ENCODE measurements at regions of chr11 and their contacts with region 1.

Region 1: DNA sequence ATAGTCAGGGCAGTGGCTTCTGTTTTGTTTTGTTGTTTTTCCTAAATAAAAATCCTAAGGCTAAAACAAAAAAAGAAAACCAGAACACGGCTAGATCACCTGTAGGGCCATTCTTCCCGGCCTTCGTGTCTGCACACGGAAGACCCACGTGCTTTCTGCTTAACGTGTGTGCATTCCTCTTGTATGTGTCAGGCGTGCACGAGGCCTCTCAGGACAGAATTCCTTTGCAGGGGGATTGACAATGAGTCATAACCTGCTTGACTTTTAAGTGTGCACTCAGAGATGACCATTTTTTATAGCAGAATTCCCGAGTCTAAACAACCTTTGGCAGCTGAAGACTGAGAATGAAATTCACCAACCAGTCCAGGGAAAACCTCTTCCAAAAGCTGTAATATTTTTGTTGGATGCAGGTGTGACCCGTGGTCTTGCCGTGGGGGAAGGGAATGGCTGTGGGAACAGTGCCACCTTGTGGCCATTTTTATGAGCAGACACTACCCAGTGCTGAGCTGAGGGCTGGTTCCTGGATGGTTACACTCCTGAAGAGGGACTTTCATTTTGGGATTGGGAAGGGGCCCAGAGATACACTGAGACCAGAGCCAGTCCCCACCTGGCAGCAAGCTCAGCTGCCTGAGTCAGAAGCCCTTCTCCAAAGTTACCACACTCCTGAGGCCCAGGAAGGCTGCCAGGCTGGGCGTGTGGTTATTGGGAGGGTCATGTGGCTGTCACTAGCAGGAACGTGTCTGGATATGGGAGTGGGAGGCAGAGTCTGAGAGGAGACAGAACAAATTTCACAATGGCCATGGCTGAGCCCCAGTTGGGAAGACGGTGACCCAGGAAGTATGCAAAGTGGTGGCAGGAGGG is 35.8 kb upstream of the DKK3 start:
- DNase-seq: peak; percentile 90 to 92
- H3K4me3 ChIP-seq: peak overlapping the region; percentile 6; the same call in 1 of the 2 replicates
- H3K4me3 Mint-ChIP-seq: peak overlapping the region; percentile 65
- H3K27ac Mint-ChIP-seq: peak overlapping the region; percentile 97
- H3K4me1 ChIP-seq: peaks cover 45% of the 10 kb centered on the region
- H3K4me1 Mint-ChIP-seq: peaks cover 48% of the 10 kb centered on the region
- H3K27me3 ChIP-seq: no peaks in the 10 kb centered on the region
- H3K27me3 Mint-ChIP-seq: no peaks in the 10 kb centered on the region
- CTCF ChIP-seq: peak; percentile 87 to 89

Region 2: DNA sequence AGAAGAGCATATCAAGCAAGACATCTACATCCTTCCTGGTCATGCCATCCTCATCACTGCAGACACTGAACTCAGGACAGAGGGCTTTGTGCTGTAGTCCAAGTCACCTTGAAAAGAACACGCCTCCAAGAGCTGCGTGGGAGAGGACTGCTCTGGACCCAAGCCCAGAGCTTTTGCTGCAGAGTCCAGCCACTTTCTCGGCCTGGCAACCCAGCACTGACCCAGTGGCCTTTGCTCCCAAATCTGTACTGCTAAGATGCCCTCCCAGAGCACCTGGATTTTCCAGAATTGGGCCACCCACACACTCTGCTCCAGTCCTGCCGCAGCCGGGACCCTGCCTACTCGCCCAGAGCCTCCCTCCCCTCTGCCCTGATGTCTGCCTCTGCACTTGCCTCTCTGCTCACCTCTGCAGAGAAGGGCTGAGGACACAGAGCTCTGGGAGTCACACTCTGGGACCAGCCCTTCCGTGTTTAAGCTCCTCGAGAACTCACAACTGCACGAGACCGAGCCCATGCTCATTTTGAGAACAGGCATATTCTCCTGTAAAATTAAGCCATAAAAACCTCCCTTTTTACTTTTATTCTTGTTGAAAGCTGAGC is 607.4 kb before region 1 on chr11:
- CTCF ChIA-PET with region 1: no interaction called
- POLR2A ChIA-PET with region 1: no interaction called
- intact Hi-C with region 1: no loop called
- DNase-seq: no peak
- H3K4me3 ChIP-seq: no peak overlapping the region
- H3K4me3 Mint-ChIP-seq: no peak overlapping the region
- H3K27ac Mint-ChIP-seq: no peak overlapping the region
- H3K4me1 ChIP-seq: no peaks in the 10 kb centered on the region
- H3K4me1 Mint-ChIP-seq: no peaks in the 10 kb centered on the region
- H3K27me3 ChIP-seq: no peaks in the 10 kb centered on the region
- H3K27me3 Mint-ChIP-seq: peaks cover 11% of the 10 kb centered on the region
- CTCF ChIP-seq: no peak

Region 3: DNA sequence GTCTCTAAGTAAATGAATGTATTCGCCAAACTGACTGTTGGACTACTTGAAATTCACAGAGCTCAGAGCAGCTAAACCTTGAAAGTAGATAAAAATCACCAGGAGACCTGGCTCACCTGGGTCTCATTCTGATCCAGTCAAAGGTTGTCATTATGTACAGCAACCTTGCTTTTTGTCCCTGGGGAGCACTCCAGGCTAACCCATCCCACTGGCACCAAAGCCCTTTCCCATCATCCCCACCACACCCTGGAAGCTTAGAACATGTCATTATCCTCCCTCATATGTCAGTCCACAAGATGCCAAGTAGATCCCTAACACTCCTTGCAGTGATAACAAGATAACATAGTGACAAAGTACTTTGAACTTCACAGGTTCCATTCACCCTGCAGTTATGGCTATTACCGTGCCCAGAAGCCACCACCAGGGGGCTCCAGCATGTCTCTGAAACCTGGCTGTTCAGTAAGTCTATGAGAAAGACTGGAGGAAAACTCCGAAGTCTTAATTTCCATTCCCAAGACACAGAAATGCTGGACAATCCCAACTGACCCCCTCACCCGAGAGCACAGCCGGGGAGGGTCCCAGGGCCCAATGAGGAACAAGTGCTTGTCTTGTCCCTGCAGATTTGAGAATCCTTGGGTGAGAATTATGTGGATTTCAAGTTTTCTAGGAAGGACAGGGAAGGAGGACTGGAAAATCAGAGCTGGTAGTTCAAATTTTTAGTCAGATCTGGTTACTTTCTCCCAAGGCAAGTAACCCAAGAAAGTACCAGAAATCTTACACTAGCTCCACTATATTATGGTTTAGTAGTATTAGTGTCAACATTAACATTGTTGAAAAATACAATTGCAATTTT is 245.4 kb before region 1 on chr11:
- CTCF ChIA-PET with region 1: interaction called, 8 read pairs
- POLR2A ChIA-PET with region 1: no interaction called
- intact Hi-C with region 1: loop called (anchors 1 kb)
- DNase-seq: peak; percentile 83 to 89
- H3K4me3 ChIP-seq: no peak overlapping the region
- H3K4me3 Mint-ChIP-seq: no peak overlapping the region
- H3K27ac Mint-ChIP-seq: no peak overlapping the region
- H3K4me1 ChIP-seq: no peaks in the 10 kb centered on the region; the same call in 1 of the 2 replicates
- H3K4me1 Mint-ChIP-seq: no peaks in the 10 kb centered on the region
- H3K27me3 ChIP-seq: peaks cover 1% of the 10 kb centered on the region
- H3K27me3 Mint-ChIP-seq: peaks cover 6% of the 10 kb centered on the region
- CTCF ChIP-seq: peak; percentile 96

Region 4: DNA sequence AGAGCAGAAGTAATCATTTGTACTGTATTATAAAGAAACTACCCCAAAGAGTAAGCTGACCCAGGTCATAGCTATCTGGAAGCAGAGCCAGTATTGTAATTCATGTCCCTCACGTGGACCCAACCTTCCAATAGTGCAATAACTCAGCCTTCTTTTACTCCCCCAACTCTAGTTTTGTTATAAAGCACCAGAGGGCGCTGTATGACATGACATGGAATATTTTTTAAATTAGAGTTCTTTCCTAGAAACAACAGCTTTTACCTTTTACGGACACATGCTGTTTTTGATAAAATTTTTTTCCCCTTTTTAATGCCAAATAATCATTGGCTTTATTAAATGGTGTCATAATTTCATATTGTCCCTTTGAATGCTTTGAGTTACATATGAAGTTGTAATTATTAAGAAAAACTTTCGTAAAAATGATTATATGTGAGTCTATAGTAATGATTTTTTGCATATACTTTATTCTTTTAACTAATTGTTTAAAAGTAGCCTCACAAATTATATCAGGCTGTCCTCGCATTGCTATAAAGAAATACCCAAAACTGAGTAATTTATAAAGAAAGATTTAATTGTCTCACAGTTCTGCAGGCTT is 112.6 kb before region 1 on chr11:
- CTCF ChIA-PET with region 1: interaction called, 26 read pairs
- POLR2A ChIA-PET with region 1: no interaction called
- intact Hi-C with region 1: loop called (anchors 1 kb)
- DNase-seq: peak in 1 of 2 experiments; percentile 39
- H3K4me3 ChIP-seq: no peak overlapping the region
- H3K4me3 Mint-ChIP-seq: no peak overlapping the region
- H3K27ac Mint-ChIP-seq: no peak overlapping the region
- H3K4me1 ChIP-seq: no peaks in the 10 kb centered on the region
- H3K4me1 Mint-ChIP-seq: no peaks in the 10 kb centered on the region
- H3K27me3 ChIP-seq: no peaks in the 10 kb centered on the region
- H3K27me3 Mint-ChIP-seq: no peaks in the 10 kb centered on the region
- CTCF ChIP-seq: peak; percentile 56 to 65

Region 5: GRCh38 chr11:11993839-11994238 is 50.4 kb before region 1 on chr11:
- CTCF ChIA-PET with region 1: no interaction called
- POLR2A ChIA-PET with region 1: no interaction called
- intact Hi-C with region 1: loop called (anchors 1 kb)
- DNase-seq: no peak
- H3K4me3 ChIP-seq: no peak overlapping the region
- H3K4me3 Mint-ChIP-seq: peak overlapping the region; percentile 52
- H3K27ac Mint-ChIP-seq: peak overlapping the region; percentile 95
- H3K4me1 ChIP-seq: peaks cover 50% of the 10 kb centered on the region
- H3K4me1 Mint-ChIP-seq: peaks cover 48% of the 10 kb centered on the region
- H3K27me3 ChIP-seq: no peaks in the 10 kb centered on the region
- H3K27me3 Mint-ChIP-seq: no peaks in the 10 kb centered on the region
- CTCF ChIP-seq: no peak

Region 6: GRCh38 chr11:12008790-12009616 is 35.2 kb before region 1 on chr11:
- CTCF ChIA-PET with region 1: interaction called, 10 read pairs
- POLR2A ChIA-PET with region 1: interaction called, 3 read pairs
- intact Hi-C with region 1: no loop called
- DNase-seq: peak; percentile 67 to 83
- H3K4me3 ChIP-seq: peak overlapping the region; percentile 95
- H3K4me3 Mint-ChIP-seq: peak overlapping the region; percentile 93
- H3K27ac Mint-ChIP-seq: peak overlapping the region; percentile 63
- H3K4me1 ChIP-seq: peaks cover 12% of the 10 kb centered on the region; the same call in 1 of the 2 replicates
- H3K4me1 Mint-ChIP-seq: peaks cover 24% of the 10 kb centered on the region
- H3K27me3 ChIP-seq: no peaks in the 10 kb centered on the region
- H3K27me3 Mint-ChIP-seq: no peaks in the 10 kb centered on the region
- CTCF ChIP-seq: no peak

Region 7: GRCh38 chr11:12102588-12103410 is 58.6 kb after region 1 on chr11:
- CTCF ChIA-PET with region 1: interaction called, 5 read pairs
- POLR2A ChIA-PET with region 1: no interaction called
- intact Hi-C with region 1: loop called (anchors 2 kb)
- DNase-seq: no peak
- H3K4me3 ChIP-seq: no peak overlapping the region
- H3K4me3 Mint-ChIP-seq: no peak overlapping the region
- H3K27ac Mint-ChIP-seq: peak overlapping the region; percentile 64
- H3K4me1 ChIP-seq: peaks cover 17% of the 10 kb centered on the region
- H3K4me1 Mint-ChIP-seq: peaks cover 41% of the 10 kb centered on the region
- H3K27me3 ChIP-seq: no peaks in the 10 kb centered on the region
- H3K27me3 Mint-ChIP-seq: no peaks in the 10 kb centered on the region
- CTCF ChIP-seq: no peak

Region 8: DNA sequence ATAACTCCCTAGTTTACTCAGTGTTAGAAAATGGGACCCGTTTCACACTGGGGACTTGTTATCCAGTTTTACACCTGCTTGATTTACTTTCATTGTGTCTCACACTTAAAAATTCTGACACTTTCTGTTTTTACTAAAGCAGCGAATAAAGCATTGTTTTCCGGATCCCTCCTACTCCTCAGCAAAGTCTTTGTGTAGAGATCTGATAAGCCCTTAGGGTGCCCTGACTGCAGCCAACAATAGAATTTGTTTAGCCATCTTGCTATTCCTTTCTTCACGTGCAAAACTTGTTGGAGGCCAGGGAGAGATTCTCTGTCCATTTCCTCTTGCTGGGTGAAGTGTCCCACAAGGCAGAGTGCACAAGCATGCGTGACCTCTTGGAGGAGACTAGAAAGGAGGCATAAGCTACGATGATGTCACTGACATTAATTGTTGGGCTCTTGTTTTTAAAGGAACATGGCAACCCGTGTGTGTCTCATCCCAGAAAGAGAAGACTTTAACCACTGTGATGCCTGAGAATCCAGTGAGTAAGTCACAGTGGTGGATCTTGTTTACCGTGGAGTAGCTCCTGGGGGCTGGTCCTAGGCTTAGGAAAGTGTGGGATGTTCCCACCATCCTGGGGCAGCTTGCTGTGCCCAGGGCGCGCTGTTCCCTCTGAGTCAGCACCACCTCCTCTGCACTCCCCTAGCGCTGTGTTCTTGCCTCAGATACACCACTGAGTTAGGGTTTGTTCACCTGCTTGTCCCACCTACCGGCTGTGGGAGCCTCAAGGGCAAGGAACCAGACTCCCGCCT is 93.9 kb after region 1 on chr11:
- CTCF ChIA-PET with region 1: no interaction called
- POLR2A ChIA-PET with region 1: no interaction called
- intact Hi-C with region 1: no loop called
- DNase-seq: peak in 1 of 2 experiments; percentile 19
- H3K4me3 ChIP-seq: no peak overlapping the region
- H3K4me3 Mint-ChIP-seq: no peak overlapping the region
- H3K27ac Mint-ChIP-seq: peak overlapping the region; percentile 65
- H3K4me1 ChIP-seq: peaks cover 71% of the 10 kb centered on the region
- H3K4me1 Mint-ChIP-seq: peaks cover 47% of the 10 kb centered on the region
- H3K27me3 ChIP-seq: no peaks in the 10 kb centered on the region
- H3K27me3 Mint-ChIP-seq: no peaks in the 10 kb centered on the region
- CTCF ChIP-seq: no peak

Region 9: DNA sequence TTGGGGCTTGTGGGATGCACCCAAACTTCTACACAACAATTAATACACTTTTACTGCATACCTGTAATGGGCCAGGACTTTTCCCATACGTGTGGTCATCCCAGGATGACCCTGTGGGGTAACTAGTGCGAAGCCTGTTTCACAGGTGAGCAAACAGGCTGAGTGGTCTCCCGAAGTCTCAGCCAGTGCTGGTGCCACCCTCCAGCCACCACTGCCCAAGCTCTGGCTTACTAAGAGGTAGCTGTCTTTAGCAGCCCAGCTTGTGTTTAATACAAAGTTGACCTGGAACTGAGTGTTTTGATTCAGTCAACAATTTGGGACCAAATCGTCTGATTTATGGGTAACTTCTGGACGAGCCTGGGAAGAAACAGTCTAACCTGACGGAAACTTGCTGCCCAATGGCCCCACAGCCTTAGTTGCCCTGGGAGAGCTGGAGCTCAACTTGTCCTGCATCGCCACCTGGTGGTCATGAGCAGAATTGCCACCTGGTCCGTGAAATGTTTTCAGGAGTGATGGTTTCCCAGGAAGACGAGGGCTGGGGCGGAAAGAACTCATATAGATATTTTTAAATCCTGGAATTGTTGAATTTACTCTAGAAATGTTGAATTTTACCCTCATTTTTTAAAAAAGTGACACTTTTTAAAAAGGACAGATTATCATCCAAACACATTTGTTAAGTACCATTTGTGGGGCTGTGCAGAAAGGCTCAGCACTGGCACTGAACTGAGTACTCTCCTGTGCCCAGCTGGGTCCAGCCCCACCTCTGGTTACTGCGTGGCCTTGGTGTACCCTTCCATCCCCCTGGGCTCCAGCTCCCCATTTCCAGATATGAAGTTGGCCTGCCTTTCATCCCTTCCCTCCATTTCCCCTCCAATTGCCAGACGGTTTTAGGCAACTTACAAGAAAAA is 237.6 kb after region 1 on chr11:
- CTCF ChIA-PET with region 1: interaction called, 31 read pairs
- POLR2A ChIA-PET with region 1: interaction called, 7 read pairs
- intact Hi-C with region 1: loop called (anchors 1 kb)
- DNase-seq: peak; percentile 84 to 89
- H3K4me3 ChIP-seq: no peak overlapping the region
- H3K4me3 Mint-ChIP-seq: no peak overlapping the region
- H3K27ac Mint-ChIP-seq: peak overlapping the region; percentile 83
- H3K4me1 ChIP-seq: peaks cover 36% of the 10 kb centered on the region
- H3K4me1 Mint-ChIP-seq: peaks cover 39% of the 10 kb centered on the region
- H3K27me3 ChIP-seq: no peaks in the 10 kb centered on the region
- H3K27me3 Mint-ChIP-seq: no peaks in the 10 kb centered on the region
- CTCF ChIP-seq: peak; percentile 91 to 97

Region 10: GRCh38 chr11:12469451-12469850 is 425.3 kb after region 1 on chr11:
- CTCF ChIA-PET with region 1: no interaction called
- POLR2A ChIA-PET with region 1: no interaction called
- intact Hi-C with region 1: no loop called
- DNase-seq: no peak
- H3K4me3 ChIP-seq: no peak overlapping the region
- H3K4me3 Mint-ChIP-seq: no peak overlapping the region
- H3K27ac Mint-ChIP-seq: no peak overlapping the region
- H3K4me1 ChIP-seq: no peaks in the 10 kb centered on the region
- H3K4me1 Mint-ChIP-seq: peaks cover 9% of the 10 kb centered on the region
- H3K27me3 ChIP-seq: no peaks in the 10 kb centered on the region
- H3K27me3 Mint-ChIP-seq: no peaks in the 10 kb centered on the region
- CTCF ChIP-seq: no peak

Measured in Caco-2 (cell line).